Activated T-helper 1 cell treated with anti-CD3 and anti-CD28 coated beads, Interleukin-12 subunit alpha, Interleukin-12 subunit beta, Interleukin-2, Interleukin-4 antibody, amounts not matched to agents 30 ng/mL and 10 ng/mL and 1 ng/mL, durations not matched to agents 14 hours and 24 hours and 36 hours (primary cell): ENCODE measurements at regions of chr9 and their contacts with region 1.

Region 1: GRCh38 chr9:89701221-89701798 is 96.5 kb downstream of the GADD45G start:
- DNase-seq: peak; percentile 82
- H3K4me3 Mint-ChIP-seq: peak overlapping the region; percentile 92
- H3K27ac Mint-ChIP-seq: peak overlapping the region; percentile 97
- H3K4me1 Mint-ChIP-seq: peaks cover 98% of the 10 kb centered on the region
- H3K27me3 Mint-ChIP-seq: no peaks in the 10 kb centered on the region

Region 2: GRCh38 chr9:89310475-89311346 is 390.6 kb before region 1 on chr9 and contains the start of gene CKS2:
- intact Hi-C with region 1: loop called (anchors 5 kb)
- DNase-seq: peak; percentile 100
- H3K4me3 Mint-ChIP-seq: peak within 1 kb of the TSS; percentile 92
- H3K27ac Mint-ChIP-seq: peak within 1 kb of the TSS; percentile 98
- H3K4me1 Mint-ChIP-seq: peaks cover 31% of the 10 kb centered on the region
- H3K27me3 Mint-ChIP-seq: peaks cover 2% of the 10 kb centered on the region
- total RNA-seq, gene CKS2: 148 and 162 TPM in 2 replicates

Region 3: DNA sequence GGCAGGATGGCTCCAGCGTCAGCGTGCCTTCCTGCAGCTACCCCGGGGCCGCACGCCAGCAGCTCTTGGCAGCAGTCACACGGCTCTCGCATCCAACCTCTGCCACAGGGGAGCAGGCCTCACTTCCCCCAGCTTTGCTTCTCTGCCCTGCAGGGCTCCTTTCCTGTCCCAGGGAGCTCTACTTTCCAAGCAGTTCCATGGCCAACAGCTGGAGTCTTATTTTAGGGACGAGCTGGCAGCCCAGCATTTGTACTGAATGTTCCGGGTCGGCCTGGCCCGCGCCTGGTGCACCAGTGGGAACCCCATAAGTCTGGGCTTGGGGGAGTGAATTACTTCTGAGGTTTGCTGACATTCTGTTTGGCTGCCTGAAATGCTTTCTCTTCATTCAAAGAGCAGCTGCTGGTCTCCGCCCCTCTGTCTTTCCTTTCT is 61.9 kb before region 1 on chr9:
- intact Hi-C with region 1: no loop called
- DNase-seq: no peak
- H3K4me3 Mint-ChIP-seq: no peak overlapping the region
- H3K27ac Mint-ChIP-seq: no peak overlapping the region
- H3K4me1 Mint-ChIP-seq: peaks cover 15% of the 10 kb centered on the region
- H3K27me3 Mint-ChIP-seq: peaks cover 2% of the 10 kb centered on the region

Region 4: DNA sequence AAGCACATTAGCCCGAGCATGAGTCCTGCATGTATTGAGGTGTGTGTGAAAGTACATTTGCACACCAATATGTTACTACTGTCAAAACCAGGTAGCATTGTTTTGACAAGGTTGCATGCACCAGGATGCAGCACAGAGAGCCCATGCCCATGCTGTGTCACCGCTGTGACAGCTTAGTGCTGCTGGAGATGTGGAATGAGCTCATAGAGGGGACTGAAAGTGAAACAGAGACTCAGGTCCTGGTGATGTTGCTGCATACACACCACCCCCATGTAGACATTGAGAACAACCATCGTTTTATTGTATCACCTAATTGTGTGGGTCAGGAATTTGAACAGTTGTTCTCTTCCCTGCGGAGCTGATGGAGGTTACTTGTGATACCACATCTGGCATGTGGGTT is 43.5 kb before region 1 on chr9:
- intact Hi-C with region 1: loop called (anchors 1 kb)
- DNase-seq: peak; percentile 64
- H3K4me3 Mint-ChIP-seq: no peak overlapping the region
- H3K27ac Mint-ChIP-seq: peak overlapping the region; percentile 48
- H3K4me1 Mint-ChIP-seq: peaks cover 55% of the 10 kb centered on the region
- H3K27me3 Mint-ChIP-seq: peaks cover 11% of the 10 kb centered on the region

Region 5: GRCh38 chr9:89738137-89738932 is 37.0 kb after region 1 on chr9:
- intact Hi-C with region 1: loop called (anchors 1 kb)
- DNase-seq: no peak
- H3K4me3 Mint-ChIP-seq: no peak overlapping the region
- H3K27ac Mint-ChIP-seq: peak overlapping the region; percentile 86
- H3K4me1 Mint-ChIP-seq: peaks cover 70% of the 10 kb centered on the region
- H3K27me3 Mint-ChIP-seq: no peaks in the 10 kb centered on the region

Region 6: DNA sequence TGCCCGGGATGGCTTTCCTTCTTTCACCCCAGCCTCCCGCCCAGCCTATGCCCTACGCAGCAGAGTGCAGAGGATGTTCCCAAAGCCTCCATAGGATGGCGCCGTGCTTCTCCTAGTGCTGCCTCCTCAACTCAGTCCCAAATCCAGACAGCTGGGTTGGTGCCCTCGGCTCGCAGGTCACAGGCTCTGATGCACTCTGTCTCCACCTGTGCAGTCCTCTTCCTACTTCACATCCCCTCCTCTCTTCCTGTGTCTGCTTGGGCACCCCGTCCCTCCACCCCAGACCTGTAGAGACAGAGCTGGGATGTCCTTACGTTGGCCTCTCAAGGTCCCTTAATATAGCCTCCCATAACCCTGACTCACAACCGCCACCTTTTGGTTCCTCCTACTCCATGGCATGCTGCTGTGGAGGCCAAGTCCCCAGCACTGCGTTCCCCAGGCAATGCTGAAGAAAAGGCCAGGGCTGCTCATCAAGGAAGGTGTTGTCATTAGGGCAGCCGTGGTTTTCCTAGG is 217.9 kb after region 1 on chr9:
- intact Hi-C with region 1: loop called (anchors 1 kb)
- DNase-seq: peak; percentile 41
- H3K4me3 Mint-ChIP-seq: peak overlapping the region; percentile 16
- H3K27ac Mint-ChIP-seq: no peak overlapping the region
- H3K4me1 Mint-ChIP-seq: peaks cover 51% of the 10 kb centered on the region
- H3K27me3 Mint-ChIP-seq: peaks cover 2% of the 10 kb centered on the region

Region 7: DNA sequence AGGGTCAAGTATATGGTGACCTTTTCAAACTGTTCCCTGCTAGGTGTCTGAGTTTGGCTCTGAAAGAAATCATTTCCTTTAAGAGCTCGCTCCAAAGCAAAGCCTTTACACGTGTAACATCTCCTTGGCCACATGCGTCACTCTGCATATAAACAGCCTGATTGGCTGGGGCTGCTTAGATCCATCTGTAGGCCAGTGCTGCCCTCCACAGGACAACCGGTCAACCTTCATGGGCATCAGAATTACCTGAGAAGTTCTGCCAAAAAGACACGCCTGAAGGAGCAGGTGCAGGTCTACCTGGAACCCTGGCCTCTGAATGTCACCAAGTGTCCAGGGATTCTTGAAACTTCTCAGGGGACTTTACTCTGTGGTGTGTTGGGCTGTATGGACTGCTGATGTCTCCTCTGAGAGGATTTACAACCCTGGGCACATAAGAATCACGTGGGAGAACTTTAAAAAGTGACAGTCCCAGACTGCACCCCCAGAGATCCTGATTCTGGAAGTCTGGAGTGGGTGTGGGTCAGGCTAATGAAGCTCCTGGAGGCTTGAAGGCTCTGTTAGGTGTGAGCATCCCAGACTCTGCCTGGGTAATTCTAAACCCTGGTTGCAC is 401.1 kb after region 1 on chr9:
- intact Hi-C with region 1: loop called (anchors 1 kb)
- DNase-seq: peak; percentile 75
- H3K4me3 Mint-ChIP-seq: no peak overlapping the region
- H3K27ac Mint-ChIP-seq: peak overlapping the region; percentile 31
- H3K4me1 Mint-ChIP-seq: peaks cover 18% of the 10 kb centered on the region
- H3K27me3 Mint-ChIP-seq: peaks cover 7% of the 10 kb centered on the region